WTC11 (cell line): ENCODE measurements at regions of chr10 and their contacts with region 1.

Region 1: GRCh38 chr10:70461215-70461986 is 17.2 kb upstream of the PALD1 start:
- DNase-seq: peak; percentile 74
- ATAC-seq: peak; percentile 55
- H3K4me3 Mint-ChIP-seq: no peak overlapping the region
- H3K27ac Mint-ChIP-seq: no peak overlapping the region
- H3K4me1 Mint-ChIP-seq: peaks cover 47% of the 10 kb centered on the region
- H3K27me3 Mint-ChIP-seq: peaks cover 45% of the 10 kb centered on the region
- CTCF ChIP-seq: peak; percentile 79

Region 2: GRCh38 chr10:70296406-70296899 is 164.9 kb before region 1 on chr10:
- CTCF ChIA-PET with region 1: no interaction called
- POLR2A ChIA-PET with region 1: no interaction called
- DNase-seq: no peak
- ATAC-seq: peak; percentile 63
- H3K4me3 Mint-ChIP-seq: no peak overlapping the region
- H3K27ac Mint-ChIP-seq: 0 out of 2 replicates have a peak overlapping the region, but pooled peaks have one; percentile 11
- H3K4me1 Mint-ChIP-seq: peaks cover 8% of the 10 kb centered on the region
- H3K27me3 Mint-ChIP-seq: no peaks in the 10 kb centered on the region
- CTCF ChIP-seq: no peak

Region 3: GRCh38 chr10:70348228-70348850 is 113.1 kb before region 1 on chr10:
- CTCF ChIA-PET with region 1: no interaction called
- POLR2A ChIA-PET with region 1: no interaction called
- DNase-seq: peak; percentile 64
- ATAC-seq: peak; percentile 98
- H3K4me3 Mint-ChIP-seq: no peak overlapping the region
- H3K27ac Mint-ChIP-seq: no peak overlapping the region
- H3K4me1 Mint-ChIP-seq: no peaks in the 10 kb centered on the region
- H3K27me3 Mint-ChIP-seq: no peaks in the 10 kb centered on the region
- CTCF ChIP-seq: no peak; the same call in 1 of the 2 replicates

Region 4: DNA sequence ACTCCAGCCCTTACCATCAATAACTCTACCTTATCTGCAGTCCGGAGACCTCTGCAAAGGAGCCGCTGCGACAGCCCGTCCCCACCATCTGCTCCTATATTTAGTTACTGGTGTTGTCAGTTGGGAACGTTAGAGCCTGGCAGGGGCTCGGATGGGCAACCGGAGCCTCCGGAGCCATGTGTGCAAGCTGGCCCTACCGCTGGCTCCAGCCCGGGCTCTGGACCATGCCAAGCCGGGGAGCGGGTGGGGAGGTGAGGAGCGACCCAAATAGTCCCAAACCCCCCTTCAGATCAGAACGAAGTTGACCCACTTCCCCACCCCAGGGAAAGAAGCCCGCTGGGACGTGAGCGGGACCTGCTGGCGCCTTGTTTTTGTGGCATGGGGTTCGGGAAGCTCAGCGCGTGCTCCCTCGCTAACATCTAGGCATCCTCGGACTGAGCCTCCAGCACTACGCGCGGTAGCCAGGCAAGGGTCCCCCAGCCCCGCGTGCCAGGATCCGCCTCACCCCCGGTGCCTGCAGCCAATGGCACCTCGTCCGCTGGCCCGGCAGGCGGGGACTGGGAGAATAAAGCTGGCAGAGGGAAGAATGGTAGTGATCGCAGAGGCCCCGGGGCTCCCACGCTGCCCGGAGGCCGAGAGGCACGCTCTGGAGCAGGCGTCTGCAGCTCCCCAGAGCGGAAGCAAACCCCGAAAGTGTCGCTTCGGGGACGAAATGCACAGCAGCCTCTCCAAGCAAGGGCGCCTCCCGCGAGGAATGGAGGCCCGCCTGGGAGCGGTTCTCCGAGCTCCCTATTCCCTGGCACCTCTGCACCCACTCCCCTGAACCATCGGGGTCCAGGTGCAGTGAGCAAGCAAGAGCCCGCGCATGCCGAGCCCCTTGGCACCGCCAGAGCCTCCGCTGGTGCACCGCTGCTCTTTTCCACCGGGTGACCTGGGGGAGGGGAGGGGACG is 79.7 kb before region 1 on chr10:
- CTCF ChIA-PET with region 1: interaction called, 20 read pairs
- POLR2A ChIA-PET with region 1: no interaction called
- DNase-seq: peak; percentile 62
- ATAC-seq: peak; percentile 16
- H3K4me3 Mint-ChIP-seq: peak overlapping the region; percentile 82
- H3K27ac Mint-ChIP-seq: no peak overlapping the region
- H3K4me1 Mint-ChIP-seq: peaks cover 46% of the 10 kb centered on the region
- H3K27me3 Mint-ChIP-seq: peaks cover 14% of the 10 kb centered on the region
- CTCF ChIP-seq: no peak

Region 5: GRCh38 chr10:70430493-70431445 is 30.6 kb before region 1 on chr10:
- CTCF ChIA-PET with region 1: interaction called, 25 read pairs
- POLR2A ChIA-PET with region 1: no interaction called
- DNase-seq: peak; percentile 33
- ATAC-seq: peak; percentile 35
- H3K4me3 Mint-ChIP-seq: no peak overlapping the region
- H3K27ac Mint-ChIP-seq: peak overlapping the region; percentile 53
- H3K4me1 Mint-ChIP-seq: peaks cover 23% of the 10 kb centered on the region
- H3K27me3 Mint-ChIP-seq: no peaks in the 10 kb centered on the region
- CTCF ChIP-seq: no peak

Region 6: DNA sequence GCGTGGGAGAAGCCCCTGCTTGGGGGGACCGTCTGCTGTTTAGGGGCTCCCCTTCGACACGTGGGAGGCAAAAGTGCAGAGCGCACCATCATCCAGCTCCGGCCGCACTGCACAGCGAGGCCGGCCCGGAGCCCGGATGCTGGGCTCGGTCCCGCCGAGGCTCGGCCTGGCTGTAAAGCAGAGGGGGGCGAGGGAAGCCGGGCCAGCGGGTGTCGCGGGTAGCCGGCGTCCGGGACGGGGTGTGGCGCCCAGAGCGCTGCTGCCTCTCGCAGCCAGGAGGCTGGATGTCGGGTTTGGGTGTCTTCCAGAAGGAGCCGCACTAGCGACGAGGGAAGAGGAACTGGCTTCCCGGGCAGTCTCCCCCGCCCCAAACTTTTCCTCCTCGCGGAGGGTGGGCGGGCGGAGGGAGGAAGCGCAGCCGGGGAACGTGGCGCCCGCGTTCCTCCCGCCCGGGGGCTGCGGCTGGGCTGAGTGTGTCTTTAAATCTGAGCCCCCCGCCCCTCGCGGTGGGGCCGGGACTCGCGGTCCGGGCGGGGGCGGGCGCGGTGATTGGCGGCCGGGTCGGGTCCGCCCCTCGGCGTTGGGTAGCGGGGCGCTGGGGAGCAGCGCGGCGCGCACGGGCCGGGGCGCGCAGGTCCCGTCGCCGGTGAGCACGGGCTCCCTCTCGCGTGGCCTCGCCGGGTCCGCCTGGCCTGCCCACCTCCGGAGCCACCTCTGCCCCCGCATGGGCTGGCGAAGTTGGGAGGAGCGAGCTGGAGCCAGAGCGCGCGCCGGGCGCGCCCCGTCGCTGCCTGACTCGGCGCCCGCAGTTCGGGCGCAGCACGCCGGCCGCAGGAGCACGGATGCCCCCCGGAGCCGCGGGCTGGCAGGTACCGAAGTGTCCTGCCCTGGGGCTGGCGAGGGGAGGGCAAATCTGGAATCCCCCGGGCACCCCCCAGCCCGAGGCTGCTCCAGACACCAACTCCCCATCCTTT is 17.1 kb after region 1 on chr10 and contains the start of gene PALD1:
- CTCF ChIA-PET with region 1: interaction called, 59 read pairs
- POLR2A ChIA-PET with region 1: interaction called, 4 read pairs
- DNase-seq: peak; percentile 82
- ATAC-seq: peak; percentile 66
- H3K4me3 Mint-ChIP-seq: peak within 1 kb of the TSS; percentile 78
- H3K27ac Mint-ChIP-seq: peak within 1 kb of the TSS; percentile 57
- H3K4me1 Mint-ChIP-seq: peaks cover 45% of the 10 kb centered on the region
- H3K27me3 Mint-ChIP-seq: peaks cover 2% of the 10 kb centered on the region; the same call in 1 of the 2 replicates
- CTCF ChIP-seq: no peak
- total RNA-seq, gene PALD1: 36.1 to 43.6 TPM (median 38.5 TPM) in 3 replicates

Region 7: GRCh38 chr10:70508912-70509756 is 47.7 kb after region 1 on chr10:
- CTCF ChIA-PET with region 1: interaction called, 12 read pairs
- POLR2A ChIA-PET with region 1: no interaction called
- DNase-seq: peak; percentile 26
- ATAC-seq: peak; percentile 43
- H3K4me3 Mint-ChIP-seq: no peak overlapping the region
- H3K27ac Mint-ChIP-seq: peak overlapping the region; percentile 50
- H3K4me1 Mint-ChIP-seq: peaks cover 50% of the 10 kb centered on the region
- H3K27me3 Mint-ChIP-seq: no peaks in the 10 kb centered on the region
- CTCF ChIP-seq: no peak

Region 8: DNA sequence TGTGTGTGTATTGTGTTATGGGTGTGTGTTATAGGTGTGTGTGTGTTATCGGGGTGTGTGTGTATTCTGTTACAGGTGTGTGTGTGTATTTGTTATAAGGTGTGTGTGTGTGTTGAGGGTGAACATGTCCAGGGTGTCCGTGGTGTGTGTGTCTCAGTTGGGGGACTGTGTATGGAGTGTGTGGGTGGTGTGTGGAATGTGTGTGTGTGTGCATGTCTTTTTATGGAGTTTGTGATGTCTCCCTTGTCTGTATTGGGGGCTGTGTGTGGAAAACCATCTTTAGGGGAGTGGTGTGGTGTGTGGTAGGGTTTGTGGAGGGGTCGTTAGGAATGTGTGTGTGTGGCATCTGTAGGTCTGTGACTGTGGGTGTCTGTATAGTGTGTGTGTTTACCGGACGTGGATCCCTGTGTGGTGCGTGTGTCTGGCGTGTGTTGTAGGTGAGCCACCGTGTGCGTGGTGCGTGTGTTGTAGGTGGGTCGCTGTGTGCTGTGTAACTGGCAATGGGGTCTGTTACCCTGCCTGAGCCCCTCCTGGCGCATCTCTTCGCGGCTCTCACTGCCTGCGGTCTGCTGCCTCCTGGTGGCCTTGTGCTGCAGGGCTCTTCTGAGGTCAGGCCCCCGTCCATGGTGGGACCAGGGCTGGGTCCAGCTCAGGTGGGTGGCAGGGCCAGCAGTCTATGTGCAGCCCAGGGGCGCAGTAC is 78.8 kb after region 1 on chr10:
- CTCF ChIA-PET with region 1: interaction called, 187 read pairs
- POLR2A ChIA-PET with region 1: no interaction called
- DNase-seq: peak; percentile 77
- ATAC-seq: peak; percentile 63
- H3K4me3 Mint-ChIP-seq: no peak overlapping the region
- H3K27ac Mint-ChIP-seq: no peak overlapping the region
- H3K4me1 Mint-ChIP-seq: peaks cover 16% of the 10 kb centered on the region
- H3K27me3 Mint-ChIP-seq: no peaks in the 10 kb centered on the region
- CTCF ChIP-seq: peak; percentile 72

Region 9: GRCh38 chr10:70578371-70578947 is 117.1 kb after region 1 on chr10:
- CTCF ChIA-PET with region 1: no interaction called
- POLR2A ChIA-PET with region 1: no interaction called
- DNase-seq: no peak
- ATAC-seq: no peak
- H3K4me3 Mint-ChIP-seq: no peak overlapping the region
- H3K27ac Mint-ChIP-seq: no peak overlapping the region
- H3K4me1 Mint-ChIP-seq: 0 out of 2 replicates have a peak, but pooled peaks cover 3% of the 10 kb centered on the region
- H3K27me3 Mint-ChIP-seq: no peaks in the 10 kb centered on the region
- CTCF ChIP-seq: no peak